Activated naive CD4-positive, alpha-beta T cell treated with anti-CD3 and anti-CD28 coated beads for 36 hours (primary cell): ENCODE measurements at regions of chr13 and their contacts with region 1.

Region 1: GRCh38 chr13:74287724-74288169 is 153.5 kb upstream of the KLF12 start:
- DNase-seq: peak; percentile 88
- H3K4me3 Mint-ChIP-seq: peak overlapping the region; percentile 73
- H3K27ac Mint-ChIP-seq: peak overlapping the region; percentile 61
- H3K4me1 Mint-ChIP-seq: peaks cover 66% of the 10 kb centered on the region
- H3K27me3 Mint-ChIP-seq: no peaks in the 10 kb centered on the region

Region 2: DNA sequence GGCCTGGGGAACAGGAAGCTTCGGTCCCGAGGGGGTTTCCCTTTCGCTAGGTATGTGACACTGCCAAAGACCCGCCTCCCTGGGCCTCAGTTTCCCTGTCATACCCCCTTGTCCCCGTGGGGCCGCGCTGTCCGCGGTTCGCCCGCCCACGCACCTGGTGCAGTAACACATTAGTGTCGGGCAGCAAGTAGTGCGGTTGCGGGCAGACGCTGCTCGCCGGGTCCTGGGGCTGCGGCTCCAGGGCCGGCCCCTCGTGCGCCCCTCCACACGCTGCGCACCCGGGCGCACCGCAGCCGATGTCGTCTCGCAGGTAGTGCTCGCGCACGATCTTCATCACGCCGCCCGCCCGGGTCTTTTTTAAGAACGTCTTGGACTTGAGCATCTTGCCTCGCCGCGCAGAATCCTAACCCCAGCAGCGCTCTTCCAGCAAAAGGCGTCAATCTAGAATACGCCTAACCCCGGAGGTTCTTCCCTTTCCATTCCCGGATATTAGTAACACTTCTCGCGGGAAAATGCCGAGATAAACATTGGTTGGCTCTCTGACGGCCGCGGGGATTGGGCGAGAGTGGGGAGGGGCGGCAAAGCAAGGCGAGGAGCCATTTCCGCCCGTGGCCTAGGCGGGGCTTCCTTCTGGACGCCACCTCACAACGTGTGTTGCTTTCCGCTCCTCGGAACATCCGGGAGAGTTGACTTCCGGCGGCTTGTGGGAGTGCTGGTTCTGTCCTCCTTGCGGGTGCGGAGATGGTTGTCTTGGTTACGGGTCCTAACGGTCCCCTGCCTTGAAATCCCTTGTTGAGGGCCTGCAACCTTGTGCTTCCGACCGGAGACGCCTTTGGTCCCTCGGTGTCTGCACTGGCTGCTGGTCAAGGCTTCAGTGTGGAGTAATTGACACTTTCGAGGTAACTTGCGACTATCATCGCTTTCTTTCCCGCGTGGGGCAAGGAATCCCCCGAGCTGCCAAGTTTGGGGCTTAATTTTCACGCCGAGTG is 1506.0 kb before region 1 on chr13 and contains the starts of genes DIS3 and PIBF1:
- CTCF ChIA-PET with region 1: no interaction called
- intact Hi-C with region 1: loop called (anchors 10 kb)
- DNase-seq: peak; percentile 99
- H3K4me3 Mint-ChIP-seq: peak within 1 kb of the TSS; percentile 99
- H3K27ac Mint-ChIP-seq: peak within 1 kb of the TSS; percentile 99
- H3K4me1 Mint-ChIP-seq: peaks cover 55% of the 10 kb centered on the region
- H3K27me3 Mint-ChIP-seq: no peaks in the 10 kb centered on the region
- total RNA-seq, gene DIS3: 47.7 to 48.9 TPM
- total RNA-seq, gene PIBF1: 19.5 to 23.5 TPM

Region 3: GRCh38 chr13:73647417-73647816 is 640.3 kb before region 1 on chr13:
- CTCF ChIA-PET with region 1: no interaction called
- intact Hi-C with region 1: no loop called
- DNase-seq: no peak
- H3K4me3 Mint-ChIP-seq: no peak overlapping the region
- H3K27ac Mint-ChIP-seq: no peak overlapping the region
- H3K4me1 Mint-ChIP-seq: no peaks in the 10 kb centered on the region
- H3K27me3 Mint-ChIP-seq: no peaks in the 10 kb centered on the region

Region 4: GRCh38 chr13:73754727-73755292 is 532.9 kb before region 1 on chr13:
- CTCF ChIA-PET with region 1: interaction called, 11 read pairs
- intact Hi-C with region 1: loop called (anchors 1 kb)
- DNase-seq: peak; percentile 20
- H3K4me3 Mint-ChIP-seq: no peak overlapping the region
- H3K27ac Mint-ChIP-seq: no peak overlapping the region
- H3K4me1 Mint-ChIP-seq: peaks cover 33% of the 10 kb centered on the region
- H3K27me3 Mint-ChIP-seq: no peaks in the 10 kb centered on the region

Region 5: DNA sequence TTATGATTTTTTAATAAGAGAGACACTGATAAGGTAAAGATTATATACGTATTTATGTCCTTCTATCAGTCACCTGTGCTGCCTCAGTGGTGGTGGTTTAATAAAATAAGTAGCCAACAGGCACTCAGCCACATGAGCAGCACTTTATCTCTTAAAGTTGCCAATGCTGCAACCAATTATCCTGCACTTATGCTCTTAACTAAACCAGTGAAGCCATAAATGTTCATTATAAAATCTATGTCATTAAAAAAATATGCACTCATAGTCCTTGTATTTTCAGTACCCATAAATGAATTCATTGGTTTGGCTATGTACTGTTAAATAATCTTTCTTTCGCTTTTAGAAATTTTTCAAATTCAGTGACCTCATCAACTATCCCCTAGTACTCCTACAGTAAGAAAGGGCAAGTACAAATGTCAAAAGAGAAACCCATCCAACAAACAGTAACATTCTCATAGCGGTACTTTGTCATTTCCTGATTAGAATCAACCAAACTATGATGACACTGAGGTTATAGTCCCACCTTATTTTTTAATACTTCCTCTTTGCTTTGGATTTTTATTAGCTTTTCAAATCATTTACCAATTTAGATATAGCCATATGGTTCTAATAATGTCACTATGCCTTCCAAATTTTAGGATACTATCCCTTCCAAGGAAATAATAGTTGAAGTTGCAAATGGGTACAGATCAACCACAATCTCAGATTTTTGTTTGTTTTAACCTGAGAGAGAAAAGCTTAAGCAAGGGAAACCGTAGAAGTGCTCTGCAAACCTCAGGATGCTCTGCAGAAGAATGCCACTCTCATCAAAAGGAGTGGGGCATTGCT is 344.4 kb before region 1 on chr13:
- CTCF ChIA-PET with region 1: interaction called, 6 read pairs
- intact Hi-C with region 1: loop called (anchors 1 kb)
- DNase-seq: no peak
- H3K4me3 Mint-ChIP-seq: peak overlapping the region; percentile 33
- H3K27ac Mint-ChIP-seq: peak overlapping the region; percentile 74
- H3K4me1 Mint-ChIP-seq: peaks cover 74% of the 10 kb centered on the region
- H3K27me3 Mint-ChIP-seq: no peaks in the 10 kb centered on the region

Region 6: DNA sequence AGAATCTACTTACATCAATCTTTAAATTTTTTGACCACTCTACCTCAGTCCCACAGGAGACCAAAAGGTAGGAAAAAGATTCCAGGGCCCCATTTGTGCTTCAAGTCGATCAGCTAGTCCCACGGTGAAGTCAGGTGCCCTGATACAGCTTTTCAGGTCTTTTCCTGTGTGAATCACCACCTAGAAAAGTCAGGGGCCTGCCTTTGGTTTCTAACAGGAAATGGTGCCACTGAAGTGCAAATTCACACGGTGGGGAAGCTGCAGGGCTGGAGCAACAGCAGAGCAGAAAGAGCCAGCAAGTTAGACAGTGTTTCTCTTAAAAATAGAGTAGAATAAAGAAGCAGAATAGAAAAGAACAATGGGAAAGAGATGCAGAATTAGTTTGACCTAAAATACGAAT is 261.0 kb before region 1 on chr13:
- CTCF ChIA-PET with region 1: no interaction called
- intact Hi-C with region 1: loop called (anchors 1 kb)
- DNase-seq: peak; percentile 86
- H3K4me3 Mint-ChIP-seq: peak overlapping the region; percentile 72
- H3K27ac Mint-ChIP-seq: peak overlapping the region; percentile 87
- H3K4me1 Mint-ChIP-seq: peaks cover 80% of the 10 kb centered on the region
- H3K27me3 Mint-ChIP-seq: no peaks in the 10 kb centered on the region

Region 7: GRCh38 chr13:74230984-74231501 is 56.7 kb before region 1 on chr13:
- CTCF ChIA-PET with region 1: interaction called, 26 read pairs
- intact Hi-C with region 1: loop called (anchors 1 kb)
- DNase-seq: no peak
- H3K4me3 Mint-ChIP-seq: peak overlapping the region; percentile 52
- H3K27ac Mint-ChIP-seq: peak overlapping the region; percentile 65
- H3K4me1 Mint-ChIP-seq: peaks cover 40% of the 10 kb centered on the region
- H3K27me3 Mint-ChIP-seq: no peaks in the 10 kb centered on the region

Region 8: DNA sequence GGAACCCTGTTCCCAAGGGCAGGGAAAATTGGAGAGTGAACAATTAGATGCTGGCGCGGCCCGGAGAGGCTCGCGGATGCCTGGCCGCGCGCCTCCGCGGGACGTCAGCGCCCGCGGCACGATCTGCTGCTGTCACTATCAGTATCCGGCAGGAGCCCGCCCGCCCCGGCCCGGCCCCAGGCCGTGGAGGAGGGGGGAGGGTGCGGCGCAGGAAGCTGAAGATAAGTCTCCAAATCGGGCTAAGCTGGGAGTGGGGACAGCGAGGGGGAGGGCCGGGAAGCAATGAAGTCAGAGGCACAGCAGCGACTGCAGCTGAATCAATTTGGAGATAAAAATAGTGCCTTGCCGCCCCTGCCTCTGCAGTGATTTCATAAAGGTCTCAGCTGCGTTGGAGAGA is 288.0 kb after region 1 on chr13:
- CTCF ChIA-PET with region 1: no interaction called
- intact Hi-C with region 1: loop called (anchors 5 kb)
- DNase-seq: peak; percentile 77
- H3K4me3 Mint-ChIP-seq: peak overlapping the region; percentile 69
- H3K27ac Mint-ChIP-seq: no peak overlapping the region
- H3K4me1 Mint-ChIP-seq: peaks cover 10% of the 10 kb centered on the region
- H3K27me3 Mint-ChIP-seq: peaks cover 20% of the 10 kb centered on the region